ENCODE measurements at regions of chr3 and their contacts with region 1.

Region 1: GRCh38 chr3:172710664-172711453 is at the start of gene NCEH1:
- DNase-seq: peak; percentile 91
- ATAC-seq: peak; percentile 98
- H3K4me3 Mint-ChIP-seq: peak within 1 kb of the TSS; percentile 96
- H3K27ac Mint-ChIP-seq: peak within 1 kb of the TSS; percentile 80
- H3K4me1 Mint-ChIP-seq: peaks cover 22% of the 10 kb centered on the region
- H3K27me3 Mint-ChIP-seq: peaks cover 5% of the 10 kb centered on the region
- total RNA-seq, gene NCEH1: 8.8 to 11.4 TPM

Region 2: GRCh38 chr3:172666873-172667694 is 43.8 kb before region 1 on chr3:
- CTCF ChIA-PET with region 1: interaction called, 17 read pairs
- DNase-seq: peak; percentile 88
- ATAC-seq: peak; percentile 100
- H3K4me3 Mint-ChIP-seq: no peak overlapping the region
- H3K27ac Mint-ChIP-seq: no peak overlapping the region
- H3K4me1 Mint-ChIP-seq: peaks cover 18% of the 10 kb centered on the region
- H3K27me3 Mint-ChIP-seq: no peaks in the 10 kb centered on the region

Region 3: DNA sequence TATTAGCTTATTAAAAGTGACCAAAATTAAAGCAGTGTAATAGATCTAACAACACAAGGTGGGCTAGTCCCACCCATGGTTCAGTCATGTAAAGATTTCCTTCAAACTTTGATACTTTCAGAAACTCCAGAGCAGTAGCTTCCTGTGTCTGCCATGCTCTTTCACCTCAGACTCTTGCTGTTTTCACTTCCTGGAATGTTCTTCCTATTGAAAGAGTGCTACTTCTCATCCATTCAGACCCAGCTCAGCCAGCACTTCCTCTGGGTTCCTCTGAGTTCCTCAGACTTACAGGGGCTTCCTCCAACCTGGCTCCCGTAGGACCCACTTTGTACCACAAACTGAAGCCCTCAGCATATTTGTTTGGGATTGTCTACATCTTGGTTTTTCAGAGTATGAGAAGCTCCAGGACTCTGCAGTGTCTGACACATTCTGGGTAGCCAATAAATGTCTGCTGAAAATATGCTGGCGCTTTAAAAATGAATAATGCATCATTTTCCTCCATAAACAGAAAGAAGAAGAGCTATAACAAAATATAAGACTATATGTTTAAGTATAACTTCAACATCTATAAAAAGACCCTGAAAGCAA is 18.0 kb before region 1 on chr3:
- CTCF ChIA-PET with region 1: interaction called, 10 read pairs
- DNase-seq: no peak
- ATAC-seq: peak; percentile 16
- H3K4me3 Mint-ChIP-seq: no peak overlapping the region
- H3K27ac Mint-ChIP-seq: peak overlapping the region; percentile 35
- H3K4me1 Mint-ChIP-seq: peaks cover 21% of the 10 kb centered on the region
- H3K27me3 Mint-ChIP-seq: no peaks in the 10 kb centered on the region

Measured in activated CD8-positive, alpha-beta memory T cell treated with anti-CD3 and anti-CD28 coated beads, Interleukin-2, amount 10 ng/mL, durations not matched to agents 7 days and 5 days (primary cell).